ENCODE measurements at regions of chr16 and their contacts with region 1.

Region 1: DNA sequence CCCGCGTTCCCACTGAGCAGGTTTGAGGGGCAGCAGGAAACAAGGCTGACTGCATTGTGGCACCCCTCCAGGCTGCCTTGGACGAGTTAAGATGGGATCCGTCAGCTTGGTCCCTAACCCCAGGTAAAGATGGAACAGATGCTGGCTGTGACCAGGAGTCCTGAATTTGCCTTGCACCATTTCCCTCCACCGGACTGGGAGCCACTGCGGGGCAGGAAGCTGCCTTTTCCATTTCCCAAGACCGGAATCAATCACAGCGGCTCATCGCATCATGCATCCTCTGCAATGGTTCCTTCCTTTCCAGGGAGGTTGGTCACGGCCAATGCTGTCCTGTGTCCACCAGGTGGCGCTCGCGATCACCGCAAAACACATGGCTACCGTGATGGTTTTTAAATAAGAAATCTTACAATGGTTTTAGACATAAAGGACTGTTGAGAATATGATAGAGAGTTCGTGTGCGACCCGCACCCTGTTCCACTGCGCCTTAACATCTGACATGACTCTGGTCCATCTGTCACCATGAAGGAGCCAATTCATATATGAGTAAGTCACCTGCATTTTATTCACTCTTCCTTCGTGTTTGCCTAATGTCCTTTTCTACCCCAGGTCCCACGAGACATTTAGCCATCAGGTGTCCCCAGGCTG is 6.8 kb upstream of the MEAK7 start:
- DNase-seq: peak; percentile 75 to 93 (median 84)
- ATAC-seq: peak; percentile 16
- H3K4me3 ChIP-seq: no peak overlapping the region
- H3K4me3 Mint-ChIP-seq: no peak overlapping the region
- H3K27ac ChIP-seq: no peak overlapping the region
- H3K27ac Mint-ChIP-seq: peak overlapping the region; percentile 60
- H3K4me1 ChIP-seq: peaks cover 85% of the 10 kb centered on the region
- H3K4me1 Mint-ChIP-seq: peaks cover 73% of the 10 kb centered on the region
- H3K27me3 ChIP-seq: peaks cover 0 to 2% of the 10 kb centered on the region in 2 experiments
- H3K27me3 Mint-ChIP-seq: no peaks in the 10 kb centered on the region
- CTCF ChIP-seq: peak; percentile 95

Region 2: DNA sequence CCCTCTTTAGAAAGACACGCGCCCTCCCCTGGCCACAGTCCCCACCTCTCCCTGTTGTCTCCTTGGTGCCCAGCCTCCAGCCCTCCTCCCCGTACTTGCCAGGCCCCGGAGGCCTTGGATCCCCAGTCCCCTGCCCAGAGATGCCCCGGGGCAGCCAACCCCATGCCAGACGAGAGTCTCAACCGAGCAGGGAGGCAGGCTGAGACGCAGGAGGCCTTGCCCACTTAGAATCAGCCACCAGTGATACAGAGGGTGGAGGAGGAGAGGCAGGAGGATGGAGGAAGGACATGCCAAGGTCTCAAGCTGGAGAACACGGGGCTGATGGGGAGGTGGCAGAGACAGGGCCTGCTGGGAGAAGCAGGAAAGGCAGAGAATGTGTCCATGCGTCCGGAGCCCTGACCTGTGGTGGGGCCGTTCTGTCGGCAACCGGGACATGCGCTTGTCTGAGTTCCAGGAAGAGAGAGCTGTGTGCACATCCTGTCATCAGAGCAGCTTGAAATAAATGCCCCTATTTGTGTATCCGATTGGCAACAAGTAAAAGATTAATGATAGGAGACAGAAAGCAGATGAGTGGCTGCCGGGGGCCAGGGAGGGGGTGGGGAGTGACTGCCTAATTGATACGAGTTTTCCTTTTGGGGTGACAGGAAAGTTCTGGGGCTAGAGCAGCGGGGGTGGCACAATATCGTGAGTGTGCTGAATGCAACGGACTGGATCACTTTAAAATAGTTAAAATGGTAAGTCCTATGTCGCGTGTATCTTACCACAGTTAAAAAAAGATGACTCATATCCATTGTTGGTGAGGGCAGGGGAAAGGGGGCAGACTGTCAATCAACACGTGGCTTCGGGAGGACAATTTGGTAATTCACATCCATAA is 37.9 kb after region 1 on chr16:
- CTCF ChIA-PET with region 1: interaction called, 10 read pairs
- POLR2A ChIA-PET with region 1: interaction called, 5 read pairs
- intact Hi-C with region 1: loop called in 1 of 2 experiments (anchors 1 kb)
- DNase-seq: peak; percentile 10 to 77 (median 40)
- ATAC-seq: peak; percentile 54
- H3K4me3 ChIP-seq: peak overlapping the region; percentile 45 to 63
- H3K4me3 Mint-ChIP-seq: peak overlapping the region; percentile 82
- H3K27ac ChIP-seq: peak overlapping the region; percentile 69 to 83
- H3K27ac Mint-ChIP-seq: peak overlapping the region; percentile 98
- H3K4me1 ChIP-seq: peaks cover 63% of the 10 kb centered on the region
- H3K4me1 Mint-ChIP-seq: peaks cover 68% of the 10 kb centered on the region
- H3K27me3 ChIP-seq: no peaks in the 10 kb centered on the region
- H3K27me3 Mint-ChIP-seq: no peaks in the 10 kb centered on the region
- CTCF ChIP-seq: no peak

Region 3: DNA sequence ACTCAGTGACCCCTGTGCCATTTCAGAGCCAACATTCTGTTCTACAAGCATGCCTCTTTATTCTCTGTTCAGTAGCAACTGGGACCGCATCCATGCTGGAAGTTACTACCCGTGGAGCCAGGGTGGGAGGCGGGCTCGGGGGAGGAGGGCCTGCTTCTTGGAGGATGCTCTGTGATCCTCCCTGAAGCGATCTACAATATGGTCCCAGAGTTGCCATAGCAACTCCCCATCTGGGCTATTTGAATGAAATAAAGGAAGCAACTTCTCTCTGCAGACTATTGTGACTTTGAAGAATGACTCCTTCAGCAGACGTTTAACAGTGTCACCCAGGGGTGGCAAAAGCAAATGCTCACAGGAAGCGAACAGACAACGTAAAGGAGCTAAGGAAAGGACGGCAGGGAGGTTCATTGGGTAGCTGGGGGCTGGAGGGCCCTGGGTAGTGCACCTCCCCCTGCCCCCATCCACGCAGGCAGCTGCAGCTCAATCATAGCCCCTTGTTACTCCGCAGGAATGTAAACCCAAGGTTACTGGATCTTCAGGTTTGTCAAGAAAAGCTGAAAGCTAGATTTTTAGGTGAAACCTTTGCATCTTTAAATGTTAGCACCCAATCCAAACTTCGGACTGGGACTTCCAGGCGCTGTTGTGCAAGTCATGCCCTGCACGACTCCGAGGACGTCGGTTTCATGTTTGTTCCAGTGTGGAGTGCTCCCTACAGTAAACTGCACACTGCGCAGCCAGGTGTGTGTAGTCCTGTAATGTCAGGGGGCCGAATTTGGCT is 44.3 kb after region 1 on chr16:
- CTCF ChIA-PET with region 1: interaction called, 10 read pairs
- POLR2A ChIA-PET with region 1: interaction called, 5 read pairs
- intact Hi-C with region 1: no loop called
- DNase-seq: peak in 2 of 9 experiments; percentile 12 to 48
- ATAC-seq: no peak
- H3K4me3 ChIP-seq: no peak overlapping the region
- H3K4me3 Mint-ChIP-seq: no peak overlapping the region
- H3K27ac ChIP-seq: peak overlapping the region in 1 of 2 experiments; percentile 63
- H3K27ac Mint-ChIP-seq: no peak overlapping the region
- H3K4me1 ChIP-seq: peaks cover 41% of the 10 kb centered on the region
- H3K4me1 Mint-ChIP-seq: peaks cover 41% of the 10 kb centered on the region
- H3K27me3 ChIP-seq: no peaks in the 10 kb centered on the region
- H3K27me3 Mint-ChIP-seq: no peaks in the 10 kb centered on the region
- CTCF ChIP-seq: no peak

Region 4: GRCh38 chr16:84599521-84600202 is 88.4 kb after region 1 on chr16:
- CTCF ChIA-PET with region 1: interaction called, 29 read pairs
- POLR2A ChIA-PET with region 1: interaction called, 7 read pairs
- intact Hi-C with region 1: no loop called
- DNase-seq: peak in 6 of 9 experiments; percentile 51 to 77 (median 62)
- ATAC-seq: peak; percentile 23
- H3K4me3 ChIP-seq: peak overlapping the region; percentile 39
- H3K4me3 Mint-ChIP-seq: peak overlapping the region; percentile 80
- H3K27ac ChIP-seq: peak overlapping the region; percentile 34 to 80
- H3K27ac Mint-ChIP-seq: peak overlapping the region; percentile 97
- H3K4me1 ChIP-seq: peaks cover 91% of the 10 kb centered on the region
- H3K4me1 Mint-ChIP-seq: peaks cover 91% of the 10 kb centered on the region
- H3K27me3 ChIP-seq: no peaks in the 10 kb centered on the region
- H3K27me3 Mint-ChIP-seq: no peaks in the 10 kb centered on the region
- CTCF ChIP-seq: no peak

Region 5: DNA sequence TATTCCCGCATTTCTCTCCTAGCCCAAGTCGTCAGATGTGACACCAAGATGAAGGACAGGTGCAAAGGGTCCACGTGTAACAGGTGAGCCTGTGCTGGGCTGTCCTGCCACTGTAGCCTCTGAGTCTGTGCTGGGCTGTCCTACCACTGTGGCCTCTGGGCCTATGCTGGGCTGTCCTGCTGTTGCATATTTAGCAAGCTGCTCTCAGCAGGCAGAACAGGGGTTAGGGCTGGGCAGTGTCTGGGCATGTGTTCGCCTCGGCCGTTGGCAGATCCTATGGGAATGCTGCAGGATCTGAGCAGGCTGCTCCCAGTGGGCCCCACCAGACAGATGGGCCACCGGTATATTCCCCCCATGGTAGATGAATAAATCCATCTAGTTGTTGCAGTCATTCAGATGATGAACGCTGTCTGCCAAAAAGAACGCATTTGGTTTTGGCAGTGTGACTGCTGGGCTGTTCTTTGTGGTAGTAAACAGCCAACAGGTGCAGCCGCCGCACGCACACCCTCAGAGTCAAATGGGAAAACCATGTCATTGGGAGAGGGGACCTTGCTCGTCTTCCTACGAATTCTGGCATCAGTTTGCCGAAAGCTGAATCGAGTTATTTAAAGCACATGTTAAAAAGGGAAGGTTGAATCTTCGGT is 357.6 kb after region 1 on chr16:
- CTCF ChIA-PET with region 1: no interaction called
- POLR2A ChIA-PET with region 1: no interaction called
- intact Hi-C with region 1: no loop called
- DNase-seq: no peak
- ATAC-seq: no peak
- H3K4me3 ChIP-seq: no peak overlapping the region
- H3K4me3 Mint-ChIP-seq: no peak overlapping the region
- H3K27ac ChIP-seq: no peak overlapping the region
- H3K27ac Mint-ChIP-seq: no peak overlapping the region
- H3K4me1 ChIP-seq: no peaks in the 10 kb centered on the region
- H3K4me1 Mint-ChIP-seq: no peaks in the 10 kb centered on the region
- H3K27me3 ChIP-seq: no peaks in the 10 kb centered on the region
- H3K27me3 Mint-ChIP-seq: peaks cover 10% of the 10 kb centered on the region
- CTCF ChIP-seq: no peak